Right ventricle myocardium inferior (tissue), 1 donor: ENCODE measurements at regions of chr11 and their contacts with region 1.

Region 1: GRCh38 chr11:72605973-72606747 is 68.1 kb downstream of the PDE2A start:
- DNase-seq: no peak
- ATAC-seq: peak; percentile 62

Region 2: DNA sequence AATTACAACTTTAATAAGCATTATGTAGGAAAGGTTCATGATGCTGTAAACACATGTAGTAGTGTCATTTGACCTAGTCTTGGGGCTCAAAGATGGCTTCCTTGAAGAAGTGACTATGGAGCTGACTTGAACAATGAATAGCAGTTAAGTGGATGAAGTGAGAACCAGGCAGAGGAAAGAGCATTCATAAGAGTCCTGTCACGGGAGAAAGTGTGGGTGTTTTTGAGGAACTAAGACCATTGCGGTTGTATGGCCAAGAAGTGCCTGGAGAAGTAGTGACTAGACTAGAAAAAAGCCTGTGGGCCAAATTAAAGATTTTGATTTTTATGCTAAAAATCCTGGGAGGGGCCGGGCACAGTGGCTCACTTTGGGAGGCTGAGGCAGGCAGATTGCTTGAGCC is 614.7 kb before region 1 on chr11:
- intact Hi-C with region 1: no loop called
- DNase-seq: no peak
- ATAC-seq: peak; percentile 40

Region 3: GRCh38 chr11:72631806-72632731 is 25.9 kb after region 1 on chr11:
- intact Hi-C with region 1: loop called (anchors 2 kb)
- DNase-seq: no peak
- ATAC-seq: peak; percentile 64